Caco-2 (cell line): ENCODE measurements at regions of chr4 and their contacts with region 1.

Region 1: DNA sequence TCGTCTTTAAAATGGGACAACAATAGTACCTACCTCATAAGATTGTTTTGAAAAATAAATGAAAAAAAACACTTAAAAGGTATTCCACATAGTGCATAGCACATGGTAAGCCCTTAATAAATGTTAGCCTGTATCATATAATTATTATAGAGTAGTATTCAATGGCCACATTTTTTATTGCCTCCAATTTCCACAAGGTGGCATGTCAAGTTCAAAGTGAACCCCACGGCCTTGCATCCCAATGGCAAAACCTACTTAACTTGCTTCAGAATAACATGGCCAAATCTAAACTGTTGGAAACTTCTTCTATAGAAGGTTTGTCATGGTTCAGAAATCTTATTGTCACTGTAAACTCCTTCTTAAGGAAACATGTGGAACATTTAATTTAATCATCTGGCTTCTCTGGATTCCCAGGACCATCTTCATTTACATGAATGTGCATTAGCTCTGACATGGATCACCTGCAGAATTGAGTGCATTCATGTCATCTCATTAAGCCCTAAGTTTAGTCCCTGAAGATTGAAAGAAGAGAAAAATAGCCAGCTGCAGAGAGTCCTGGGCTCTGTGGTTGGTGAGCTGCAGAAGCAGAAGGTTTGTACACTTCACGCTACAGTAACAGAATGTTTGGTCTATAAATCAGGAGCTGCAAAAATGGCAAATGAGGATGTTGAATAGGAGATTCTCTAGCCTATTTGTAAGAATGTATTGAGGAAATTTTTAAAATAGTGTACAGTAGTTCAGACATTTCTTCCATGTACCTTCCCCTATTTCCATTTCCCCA is 61.0 kb downstream of the ANXA3 start:
- DNase-seq: no peak
- H3K4me3 ChIP-seq: no peak overlapping the region
- H3K4me3 Mint-ChIP-seq: no peak overlapping the region
- H3K27ac Mint-ChIP-seq: no peak overlapping the region
- H3K4me1 ChIP-seq: peaks cover 9% of the 10 kb centered on the region
- H3K4me1 Mint-ChIP-seq: peaks cover 41% of the 10 kb centered on the region
- H3K27me3 ChIP-seq: no peaks in the 10 kb centered on the region
- H3K27me3 Mint-ChIP-seq: no peaks in the 10 kb centered on the region
- CTCF ChIP-seq: peak in 1 of 2 experiments; percentile 20

Region 2: GRCh38 chr4:77782102-77782835 is 830.3 kb before region 1 on chr4:
- CTCF ChIA-PET with region 1: no interaction called
- POLR2A ChIA-PET with region 1: no interaction called
- intact Hi-C with region 1: no loop called
- DNase-seq: no peak
- H3K4me3 ChIP-seq: no peak overlapping the region
- H3K4me3 Mint-ChIP-seq: no peak overlapping the region
- H3K27ac Mint-ChIP-seq: no peak overlapping the region
- H3K4me1 ChIP-seq: peaks cover 9% of the 10 kb centered on the region
- H3K4me1 Mint-ChIP-seq: no peaks in the 10 kb centered on the region
- H3K27me3 ChIP-seq: no peaks in the 10 kb centered on the region
- H3K27me3 Mint-ChIP-seq: no peaks in the 10 kb centered on the region
- CTCF ChIP-seq: no peak

Region 3: GRCh38 chr4:78426972-78427371 is 185.6 kb before region 1 on chr4:
- CTCF ChIA-PET with region 1: no interaction called
- POLR2A ChIA-PET with region 1: no interaction called
- intact Hi-C with region 1: no loop called
- DNase-seq: no peak
- H3K4me3 ChIP-seq: no peak overlapping the region
- H3K4me3 Mint-ChIP-seq: no peak overlapping the region
- H3K27ac Mint-ChIP-seq: no peak overlapping the region
- H3K4me1 ChIP-seq: peaks cover 9% of the 10 kb centered on the region
- H3K4me1 Mint-ChIP-seq: peaks cover 6% of the 10 kb centered on the region
- H3K27me3 ChIP-seq: no peaks in the 10 kb centered on the region
- H3K27me3 Mint-ChIP-seq: no peaks in the 10 kb centered on the region
- CTCF ChIP-seq: no peak

Region 4: GRCh38 chr4:78775303-78776030 is 162.9 kb after region 1 on chr4:
- CTCF ChIA-PET with region 1: interaction called, 3 read pairs
- POLR2A ChIA-PET with region 1: interaction called, 5 read pairs
- intact Hi-C with region 1: loop called (anchors 5 kb)
- DNase-seq: peak; percentile 83 to 86
- H3K4me3 ChIP-seq: peak overlapping the region; percentile 57
- H3K4me3 Mint-ChIP-seq: peak overlapping the region; percentile 93
- H3K27ac Mint-ChIP-seq: peak overlapping the region; percentile 93
- H3K4me1 ChIP-seq: peaks cover 25% of the 10 kb centered on the region
- H3K4me1 Mint-ChIP-seq: no peaks in the 10 kb centered on the region
- H3K27me3 ChIP-seq: no peaks in the 10 kb centered on the region
- H3K27me3 Mint-ChIP-seq: no peaks in the 10 kb centered on the region
- CTCF ChIP-seq: no peak

Region 5: GRCh38 chr4:78923464-78924312 is 311.1 kb after region 1 on chr4:
- CTCF ChIA-PET with region 1: no interaction called
- POLR2A ChIA-PET with region 1: no interaction called
- intact Hi-C with region 1: loop called (anchors 5 kb)
- DNase-seq: no peak
- H3K4me3 ChIP-seq: no peak overlapping the region
- H3K4me3 Mint-ChIP-seq: no peak overlapping the region
- H3K27ac Mint-ChIP-seq: no peak overlapping the region
- H3K4me1 ChIP-seq: no peaks in the 10 kb centered on the region
- H3K4me1 Mint-ChIP-seq: no peaks in the 10 kb centered on the region
- H3K27me3 ChIP-seq: no peaks in the 10 kb centered on the region
- H3K27me3 Mint-ChIP-seq: no peaks in the 10 kb centered on the region
- CTCF ChIP-seq: peak in 1 of 2 experiments; percentile 10